Activated CD8-positive, alpha-beta T cell treated with anti-CD3 and anti-CD28 coated beads, Interleukin-2, amount 10 ng/mL, durations not matched to agents 7 days and 5 days (primary cell): ENCODE measurements at regions of chr17 and their contacts with region 1.

Region 1: DNA sequence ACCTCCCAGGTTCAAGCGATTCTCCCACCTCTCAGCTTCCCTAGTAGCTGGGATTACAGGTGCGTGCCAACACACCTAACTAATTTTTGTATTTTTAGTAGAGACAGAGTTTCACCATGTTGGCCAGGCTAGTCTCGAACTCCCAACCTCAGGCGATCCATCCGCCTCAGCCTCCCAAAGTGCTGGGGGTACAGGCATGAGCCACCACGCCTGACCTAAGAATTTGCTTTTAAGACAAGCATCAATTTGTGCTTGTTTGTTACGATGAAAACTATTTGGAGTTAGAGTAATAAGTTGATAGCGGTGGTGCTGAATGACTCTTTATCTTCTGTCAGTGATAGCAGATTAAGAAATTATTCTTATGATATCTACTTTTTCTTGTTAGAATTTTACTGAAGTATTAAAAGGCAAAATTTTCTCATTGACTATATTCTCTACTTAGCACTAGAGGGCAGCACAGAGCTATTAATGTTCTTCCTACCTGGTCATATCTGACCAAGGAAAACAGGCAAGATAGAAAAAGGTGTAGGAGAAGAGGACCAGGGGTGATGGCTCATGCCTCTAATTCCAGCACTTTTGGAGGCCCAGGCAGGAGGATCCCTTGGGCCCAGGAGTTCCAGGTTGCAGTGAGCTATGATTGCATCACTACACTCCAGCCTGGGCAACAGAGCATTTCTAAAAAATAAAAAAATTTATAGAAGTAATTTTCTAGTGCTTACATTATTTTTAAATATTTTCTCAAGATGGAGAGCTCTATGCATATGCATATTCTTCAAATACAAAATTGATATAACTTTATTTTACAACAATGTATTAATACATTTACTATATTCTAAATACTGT is 24.5 kb downstream of the STXBP4 start:
- DNase-seq: no peak
- ATAC-seq: no peak
- H3K4me3 Mint-ChIP-seq: no peak overlapping the region
- H3K27ac Mint-ChIP-seq: no peak overlapping the region
- H3K4me1 Mint-ChIP-seq: no peaks in the 10 kb centered on the region
- H3K27me3 Mint-ChIP-seq: no peaks in the 10 kb centered on the region

Region 2: DNA sequence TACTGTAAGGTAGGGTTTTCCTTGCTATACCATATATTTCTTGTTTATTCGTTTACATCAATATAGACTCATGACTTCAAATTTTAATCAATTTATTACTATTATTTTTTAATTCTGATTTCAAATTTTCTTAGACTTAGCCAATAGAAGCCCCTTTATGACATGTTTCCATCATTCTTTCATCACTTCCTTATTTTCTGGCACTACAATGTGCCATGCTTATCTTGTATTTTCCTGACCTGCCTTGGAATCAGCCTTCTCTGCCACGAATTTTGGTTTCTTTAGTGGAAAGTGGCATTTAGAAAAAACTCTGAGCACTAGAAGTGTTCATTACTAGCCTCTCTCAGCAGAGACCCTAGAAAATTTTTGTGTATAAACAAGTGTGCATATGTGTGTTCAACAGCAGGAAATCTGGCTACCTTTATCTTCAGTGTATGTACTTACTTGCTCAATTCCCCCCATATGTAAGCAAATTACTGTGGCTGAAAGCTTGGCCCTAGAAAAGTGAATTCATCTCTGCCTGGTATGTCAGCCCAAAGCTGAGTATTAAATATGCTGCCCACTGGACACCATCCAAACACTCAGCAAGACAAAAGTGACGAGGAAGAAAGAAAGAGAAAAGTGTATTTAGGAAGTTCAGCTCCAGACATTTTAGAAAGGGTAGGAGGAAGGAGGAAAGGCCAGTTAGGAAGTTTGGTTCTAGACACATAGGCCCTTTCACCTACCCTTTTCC is 20.4 kb before region 1 on chr17:
- CTCF ChIA-PET with region 1: interaction called, 13 read pairs
- POLR2A ChIA-PET with region 1: no interaction called
- DNase-seq: no peak
- ATAC-seq: no peak
- H3K4me3 Mint-ChIP-seq: no peak overlapping the region
- H3K27ac Mint-ChIP-seq: no peak overlapping the region
- H3K4me1 Mint-ChIP-seq: peaks cover 15% of the 10 kb centered on the region
- H3K27me3 Mint-ChIP-seq: no peaks in the 10 kb centered on the region

Region 3: DNA sequence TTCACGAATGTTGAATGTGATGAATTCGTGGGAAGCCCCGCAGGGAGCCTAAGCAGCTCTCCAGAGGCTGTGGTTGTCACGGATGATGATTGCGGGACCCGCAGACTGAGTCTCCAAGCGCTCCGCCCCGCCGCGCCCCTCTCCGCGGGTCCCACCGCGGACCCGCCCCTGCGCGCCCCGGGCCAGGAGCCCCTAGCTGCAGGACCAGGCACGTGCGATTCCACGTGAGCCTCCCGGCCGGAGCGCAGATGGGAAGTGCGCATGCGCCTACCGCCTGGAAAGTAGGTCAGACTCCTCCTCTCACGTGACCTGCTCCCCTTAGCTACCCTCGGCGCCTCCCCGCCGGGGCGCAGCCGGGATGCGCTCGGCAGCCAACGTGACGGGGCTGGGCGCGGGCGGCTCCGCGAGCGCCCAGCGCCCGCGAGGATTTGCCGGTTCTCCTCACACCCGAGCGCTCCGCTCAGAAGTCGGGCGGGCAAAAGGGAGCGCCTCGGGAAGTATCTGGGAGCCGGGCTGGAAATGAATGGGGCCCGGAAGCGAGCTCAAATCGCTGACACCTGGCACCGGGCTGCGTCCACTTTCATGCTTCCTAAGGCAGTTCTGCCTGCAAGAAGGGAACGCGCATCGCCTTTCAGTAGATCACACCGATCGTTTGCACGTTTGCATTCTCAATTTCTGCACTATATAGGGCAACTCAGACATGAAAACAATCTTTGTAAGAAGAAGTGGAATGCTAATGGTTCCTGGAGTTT is 245.3 kb after region 1 on chr17:
- CTCF ChIA-PET with region 1: interaction called, 10 read pairs
- POLR2A ChIA-PET with region 1: no interaction called
- DNase-seq: peak; percentile 86
- ATAC-seq: peak; percentile 99
- H3K4me3 Mint-ChIP-seq: peak overlapping the region; percentile 76
- H3K27ac Mint-ChIP-seq: no peak overlapping the region
- H3K4me1 Mint-ChIP-seq: peaks cover 16% of the 10 kb centered on the region
- H3K27me3 Mint-ChIP-seq: peaks cover 26% of the 10 kb centered on the region

Region 4: DNA sequence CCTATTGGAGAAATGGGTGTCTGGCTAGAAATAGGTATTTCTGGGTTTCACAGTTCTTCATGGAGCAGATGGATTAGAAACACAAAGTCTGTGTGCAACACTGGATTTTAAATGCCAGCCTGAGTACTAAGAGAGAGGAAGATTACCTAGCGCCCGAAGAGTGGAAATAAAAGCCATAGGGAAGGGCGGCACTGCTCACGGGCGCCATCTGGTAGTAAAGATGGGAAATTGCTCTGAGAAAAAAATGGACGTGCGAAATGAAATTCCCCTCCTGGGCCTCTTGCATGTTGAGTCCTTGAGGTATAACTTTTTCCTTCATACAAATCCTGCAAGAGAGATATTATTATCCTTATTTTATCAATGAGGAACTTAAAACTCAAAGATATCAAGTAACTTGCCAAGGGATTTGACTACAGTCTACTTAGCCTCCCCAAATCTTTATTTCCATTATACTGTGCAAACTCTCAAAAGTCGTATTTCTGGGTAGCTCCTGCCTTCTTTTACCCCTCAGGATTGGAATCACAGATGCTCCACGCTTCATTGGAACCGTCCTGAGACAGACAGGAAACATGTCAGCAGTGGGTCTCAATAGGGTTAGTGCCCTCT is 355.8 kb after region 1 on chr17:
- CTCF ChIA-PET with region 1: interaction called, 62 read pairs
- POLR2A ChIA-PET with region 1: no interaction called
- DNase-seq: peak; percentile 62
- ATAC-seq: no peak
- H3K4me3 Mint-ChIP-seq: no peak overlapping the region
- H3K27ac Mint-ChIP-seq: no peak overlapping the region
- H3K4me1 Mint-ChIP-seq: peaks cover 65% of the 10 kb centered on the region
- H3K27me3 Mint-ChIP-seq: no peaks in the 10 kb centered on the region

Region 5: GRCh38 chr17:55513885-55514591 is 521.0 kb after region 1 on chr17:
- CTCF ChIA-PET with region 1: interaction called, 12 read pairs
- POLR2A ChIA-PET with region 1: no interaction called
- DNase-seq: peak; percentile 84
- ATAC-seq: peak; percentile 76
- H3K4me3 Mint-ChIP-seq: no peak overlapping the region
- H3K27ac Mint-ChIP-seq: no peak overlapping the region
- H3K4me1 Mint-ChIP-seq: peaks cover 6% of the 10 kb centered on the region
- H3K27me3 Mint-ChIP-seq: peaks cover 14% of the 10 kb centered on the region